A549 (cell line): ENCODE measurements at regions of chr19 and their contacts with region 1.

Region 1: DNA sequence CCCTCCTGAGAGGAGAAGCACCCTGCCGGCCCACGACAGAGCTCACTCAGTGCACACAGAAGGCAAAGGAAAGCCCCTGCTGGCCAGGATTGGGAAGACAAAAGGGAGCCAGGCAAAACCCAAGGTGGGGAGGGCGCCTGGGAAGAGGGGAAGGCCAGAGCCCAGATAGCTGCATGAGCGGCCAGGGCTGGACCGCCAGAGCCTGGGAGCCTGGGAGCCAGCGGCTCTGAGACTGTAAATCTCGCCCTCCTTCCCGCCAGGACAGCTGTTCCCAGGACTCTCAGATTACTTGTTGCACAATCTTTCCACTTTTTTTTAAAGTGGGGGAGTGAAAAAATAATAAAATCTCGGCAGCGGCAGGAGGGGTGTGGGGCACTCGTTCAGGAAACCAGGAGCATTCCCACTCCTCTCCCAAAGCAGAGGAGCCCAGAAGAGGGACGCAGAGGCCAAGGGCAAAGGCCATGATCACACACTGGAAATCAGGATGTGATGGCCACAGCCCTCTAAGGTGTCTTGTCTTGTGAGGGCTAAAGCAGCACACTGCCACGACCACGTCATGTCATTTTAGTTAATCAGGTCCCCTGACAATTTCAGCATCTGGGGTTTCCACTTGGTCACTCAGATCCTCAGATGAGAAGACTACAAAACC is 19.6 kb upstream of the EPHX3 start:
- DNase-seq: peak; percentile 55 to 58
- ATAC-seq: peak; percentile 32 to 78; a peak in 5 of 6 replicates
- H3K4me3 ChIP-seq: no peak overlapping the region
- H3K27ac ChIP-seq: peak overlapping the region; percentile 40 to 84; a peak in 5 of 6 replicates
- H3K4me1 ChIP-seq: peaks cover 55% of the 10 kb centered on the region
- CTCF ChIP-seq: no peak
- EP300 ChIP-seq: no peak
- POLR2A ChIP-seq: no peak
- RAD21 ChIP-seq: no peak

Region 2: DNA sequence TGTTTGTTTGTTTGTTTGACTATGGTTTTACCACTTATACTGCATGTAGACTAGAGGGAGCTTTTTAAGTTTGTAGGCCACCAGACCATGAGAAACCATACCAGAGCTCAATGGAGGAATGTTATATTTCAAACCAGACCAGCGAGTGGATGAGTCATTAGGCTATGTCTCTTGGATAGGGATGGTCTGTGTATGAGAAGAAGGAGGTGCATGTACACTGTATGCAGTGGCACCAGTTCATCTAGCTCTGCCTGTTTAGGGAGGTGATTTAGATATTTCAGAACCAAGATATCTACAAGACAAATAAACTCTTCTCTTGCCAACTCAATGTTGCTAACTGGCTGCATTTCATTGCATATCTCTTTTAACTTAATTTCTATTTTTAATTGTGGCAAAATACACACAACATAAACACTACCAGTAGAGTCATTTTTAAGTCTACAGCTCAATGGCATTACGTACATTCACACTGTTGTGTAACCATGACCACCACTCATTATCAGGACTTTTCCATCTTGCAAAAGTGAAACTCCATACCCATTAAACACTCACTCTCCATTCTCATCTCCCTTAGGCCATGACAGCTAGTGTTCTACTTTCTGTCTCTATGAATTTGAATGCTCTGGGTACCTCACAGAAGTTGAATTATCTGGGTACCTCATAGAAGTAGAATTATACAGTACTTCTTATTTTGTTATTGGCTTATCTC is 115.5 kb before region 1 on chr19:
- CTCF ChIA-PET with region 1: no interaction called
- POLR2A ChIA-PET with region 1: no interaction called
- DNase-seq: no peak
- ATAC-seq: no peak
- H3K4me3 ChIP-seq: no peak overlapping the region
- H3K27ac ChIP-seq: no peak overlapping the region
- H3K4me1 ChIP-seq: no peaks in the 10 kb centered on the region
- CTCF ChIP-seq: no peak
- EP300 ChIP-seq: no peak
- POLR2A ChIP-seq: no peak
- RAD21 ChIP-seq: no peak

Region 3: GRCh38 chr19:15225760-15226159 is 26.1 kb before region 1 on chr19:
- CTCF ChIA-PET with region 1: interaction called, 13 read pairs
- POLR2A ChIA-PET with region 1: no interaction called
- DNase-seq: no peak
- ATAC-seq: no peak
- H3K4me3 ChIP-seq: no peak overlapping the region
- H3K27ac ChIP-seq: no peak overlapping the region
- H3K4me1 ChIP-seq: peaks cover 12% of the 10 kb centered on the region
- CTCF ChIP-seq: no peak
- EP300 ChIP-seq: no peak
- POLR2A ChIP-seq: no peak
- RAD21 ChIP-seq: no peak

Region 4: DNA sequence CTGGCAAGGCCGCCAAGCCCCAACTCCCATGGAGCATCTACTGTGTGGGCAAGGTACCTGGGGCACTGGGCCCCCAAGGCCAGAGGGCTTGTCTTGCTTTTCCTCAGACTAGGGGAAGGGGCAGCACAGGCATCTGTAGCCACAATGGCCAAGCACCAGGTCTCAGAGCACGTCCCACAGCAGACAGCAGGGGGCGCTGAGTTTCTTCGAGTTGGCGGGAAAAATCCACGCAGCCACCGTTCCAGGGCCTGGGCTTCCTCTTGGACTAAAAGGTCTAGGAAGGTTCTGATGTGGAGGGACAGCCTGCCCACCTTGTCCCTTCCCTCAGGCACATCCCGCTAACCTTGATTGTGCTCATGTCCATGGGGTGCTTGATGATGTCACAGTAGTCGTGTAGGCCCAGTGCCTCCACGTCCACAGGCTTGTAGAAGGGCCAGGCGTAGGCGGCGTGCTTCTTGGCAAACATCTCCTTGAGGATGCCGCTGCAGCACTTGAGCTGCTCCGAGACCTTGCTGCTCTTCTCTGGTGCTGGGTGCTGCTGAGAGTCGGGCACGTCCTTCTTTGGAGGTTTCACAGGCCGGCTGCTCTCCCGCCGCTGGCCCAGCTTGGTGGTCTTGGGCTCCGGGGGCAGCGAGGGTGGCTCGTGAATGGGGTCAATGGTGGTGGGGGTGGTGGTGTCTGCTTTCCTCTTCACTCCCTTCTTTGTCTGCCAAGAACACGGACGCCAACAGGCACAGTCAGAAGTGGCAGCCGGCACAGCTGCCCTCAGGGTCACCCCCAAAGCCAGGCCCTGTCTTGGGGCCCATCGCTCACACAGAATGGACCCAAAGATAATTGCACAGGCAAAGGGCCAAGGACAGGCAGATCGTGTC is 12.4 kb after region 1 on chr19:
- CTCF ChIA-PET with region 1: interaction called, 13 read pairs
- POLR2A ChIA-PET with region 1: no interaction called
- DNase-seq: peak; percentile 43 to 64
- ATAC-seq: peak; percentile 61 to 81; a peak in 5 of 6 replicates
- H3K4me3 ChIP-seq: no peak overlapping the region
- H3K27ac ChIP-seq: peak overlapping the region in 1 of 2 experiments; percentile 67; a peak in 2 of 6 replicates
- H3K4me1 ChIP-seq: peaks cover 19% of the 10 kb centered on the region
- CTCF ChIP-seq: peak; percentile 52
- EP300 ChIP-seq: no peak
- POLR2A ChIP-seq: no peak
- RAD21 ChIP-seq: peak; percentile 65 to 67